Activated T-helper 1 cell treated with anti-CD3 and anti-CD28 coated beads, Interleukin-12 subunit alpha, Interleukin-12 subunit beta, Interleukin-2, Interleukin-4 antibody, amounts not matched to agents 30 ng/mL and 10 ng/mL and 1 ng/mL, durations not matched to agents 14 hours and 24 hours and 36 hours (primary cell): ENCODE measurements at regions of chr22 and their contacts with region 1.

Region 1: GRCh38 chr22:40177738-40178416 is at the start of gene TNRC6B:
- DNase-seq: peak; percentile 79
- H3K4me3 Mint-ChIP-seq: peak within 1 kb of the TSS; percentile 87
- H3K27ac Mint-ChIP-seq: peak within 1 kb of the TSS; percentile 92
- H3K4me1 Mint-ChIP-seq: peaks cover 56% of the 10 kb centered on the region
- H3K27me3 Mint-ChIP-seq: no peaks in the 10 kb centered on the region
- total RNA-seq, gene TNRC6B: 26.2 and 30.9 TPM in 2 replicates

Region 2: DNA sequence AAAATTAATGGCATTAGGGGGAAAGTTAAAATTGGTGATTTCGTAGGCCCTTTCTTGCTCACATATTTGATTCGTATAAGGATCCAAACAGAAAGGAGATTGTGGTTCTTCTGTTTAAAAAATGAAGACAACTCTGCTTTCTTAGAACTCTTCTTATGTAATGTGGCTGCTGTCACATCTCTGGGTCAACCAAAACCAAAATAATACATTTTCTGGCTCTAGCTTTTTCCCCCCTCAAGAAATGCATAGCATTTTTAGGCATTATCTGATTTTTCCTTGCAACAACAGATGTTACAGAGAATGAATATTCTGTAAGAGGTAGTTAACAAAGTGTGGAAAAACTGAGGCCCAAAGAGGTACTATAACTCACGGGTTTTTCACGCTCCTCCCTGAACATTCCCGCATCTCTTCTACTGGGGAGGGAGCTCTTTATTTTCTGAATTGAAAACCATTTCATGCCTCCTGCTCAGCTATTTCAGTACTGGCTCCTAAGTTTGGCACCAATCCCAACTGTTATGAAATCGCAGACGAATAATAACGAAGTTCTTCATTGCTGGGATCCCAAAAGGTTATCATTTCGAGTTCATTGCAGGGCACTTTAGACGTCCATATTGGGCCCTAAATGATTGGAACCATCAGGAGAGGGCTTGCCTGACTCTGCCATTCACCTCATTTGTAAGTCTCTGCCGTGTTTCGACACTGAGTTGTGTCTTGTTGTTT is 259.9 kb before region 1 on chr22:
- intact Hi-C with region 1: loop called (anchors 5 kb)
- DNase-seq: no peak
- H3K4me3 Mint-ChIP-seq: peak overlapping the region; percentile 67
- H3K27ac Mint-ChIP-seq: peak overlapping the region; percentile 77
- H3K4me1 Mint-ChIP-seq: peaks cover 88% of the 10 kb centered on the region
- H3K27me3 Mint-ChIP-seq: no peaks in the 10 kb centered on the region

Region 3: DNA sequence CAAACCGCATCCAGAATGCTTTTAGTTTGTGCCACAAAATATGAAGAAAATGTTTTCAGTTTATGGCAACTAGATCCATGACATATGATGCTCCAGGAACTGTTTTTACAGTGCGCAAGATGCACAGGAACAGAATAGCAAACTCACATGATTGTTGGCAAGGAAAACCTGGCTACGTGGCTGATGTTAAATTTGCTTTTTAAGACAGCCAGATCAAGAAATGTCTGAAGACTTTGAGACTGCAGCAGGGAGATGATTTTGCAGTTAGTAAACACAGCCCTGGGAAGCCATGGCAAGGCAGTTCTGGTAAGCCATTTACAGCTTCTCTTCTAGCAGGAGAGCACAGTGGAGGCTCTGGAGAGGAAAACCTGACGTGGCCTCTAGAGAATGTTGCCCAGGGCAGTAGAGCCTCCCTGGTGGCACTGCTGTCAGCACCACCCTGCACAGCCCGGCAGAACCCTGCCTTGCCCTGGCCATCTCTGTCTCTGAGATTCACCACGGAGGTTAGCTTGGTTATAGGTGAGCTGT is 70.0 kb before region 1 on chr22:
- intact Hi-C with region 1: loop called (anchors 1 kb)
- DNase-seq: peak; percentile 16
- H3K4me3 Mint-ChIP-seq: peak overlapping the region; percentile 84
- H3K27ac Mint-ChIP-seq: peak overlapping the region; percentile 86
- H3K4me1 Mint-ChIP-seq: peaks cover 43% of the 10 kb centered on the region
- H3K27me3 Mint-ChIP-seq: no peaks in the 10 kb centered on the region

Region 4: DNA sequence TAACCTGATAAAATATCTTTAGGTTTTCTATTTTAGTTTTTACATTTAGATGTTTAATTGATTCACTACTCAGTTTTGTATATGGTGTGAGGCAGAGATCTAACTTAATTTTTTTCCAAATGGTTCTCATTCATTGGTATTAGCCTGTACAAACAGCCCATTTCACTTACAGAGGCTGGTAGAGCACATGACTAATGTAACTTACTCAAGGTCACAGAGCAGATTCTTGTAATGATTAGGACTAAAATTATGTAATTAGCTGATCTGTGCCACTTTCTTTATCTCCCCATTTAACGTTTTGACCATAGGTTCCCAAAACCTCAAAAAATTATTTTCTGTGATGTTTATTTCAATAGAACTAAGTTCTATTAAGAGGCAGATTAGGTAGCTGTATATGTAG is 16.7 kb before region 1 on chr22:
- intact Hi-C with region 1: no loop called
- DNase-seq: no peak
- H3K4me3 Mint-ChIP-seq: no peak overlapping the region
- H3K27ac Mint-ChIP-seq: no peak overlapping the region
- H3K4me1 Mint-ChIP-seq: no peaks in the 10 kb centered on the region
- H3K27me3 Mint-ChIP-seq: no peaks in the 10 kb centered on the region

Region 5: GRCh38 chr22:40215266-40215665 is 37.4 kb after region 1 on chr22:
- intact Hi-C with region 1: loop called (anchors 5 kb)
- DNase-seq: no peak
- H3K4me3 Mint-ChIP-seq: no peak overlapping the region
- H3K27ac Mint-ChIP-seq: peak overlapping the region; percentile 76
- H3K4me1 Mint-ChIP-seq: peaks cover 77% of the 10 kb centered on the region
- H3K27me3 Mint-ChIP-seq: no peaks in the 10 kb centered on the region

Region 6: GRCh38 chr22:40235308-40235707 is 57.4 kb after region 1 on chr22:
- intact Hi-C with region 1: no loop called
- DNase-seq: no peak
- H3K4me3 Mint-ChIP-seq: no peak overlapping the region
- H3K27ac Mint-ChIP-seq: no peak overlapping the region
- H3K4me1 Mint-ChIP-seq: peaks cover 32% of the 10 kb centered on the region
- H3K27me3 Mint-ChIP-seq: no peaks in the 10 kb centered on the region

Region 7: DNA sequence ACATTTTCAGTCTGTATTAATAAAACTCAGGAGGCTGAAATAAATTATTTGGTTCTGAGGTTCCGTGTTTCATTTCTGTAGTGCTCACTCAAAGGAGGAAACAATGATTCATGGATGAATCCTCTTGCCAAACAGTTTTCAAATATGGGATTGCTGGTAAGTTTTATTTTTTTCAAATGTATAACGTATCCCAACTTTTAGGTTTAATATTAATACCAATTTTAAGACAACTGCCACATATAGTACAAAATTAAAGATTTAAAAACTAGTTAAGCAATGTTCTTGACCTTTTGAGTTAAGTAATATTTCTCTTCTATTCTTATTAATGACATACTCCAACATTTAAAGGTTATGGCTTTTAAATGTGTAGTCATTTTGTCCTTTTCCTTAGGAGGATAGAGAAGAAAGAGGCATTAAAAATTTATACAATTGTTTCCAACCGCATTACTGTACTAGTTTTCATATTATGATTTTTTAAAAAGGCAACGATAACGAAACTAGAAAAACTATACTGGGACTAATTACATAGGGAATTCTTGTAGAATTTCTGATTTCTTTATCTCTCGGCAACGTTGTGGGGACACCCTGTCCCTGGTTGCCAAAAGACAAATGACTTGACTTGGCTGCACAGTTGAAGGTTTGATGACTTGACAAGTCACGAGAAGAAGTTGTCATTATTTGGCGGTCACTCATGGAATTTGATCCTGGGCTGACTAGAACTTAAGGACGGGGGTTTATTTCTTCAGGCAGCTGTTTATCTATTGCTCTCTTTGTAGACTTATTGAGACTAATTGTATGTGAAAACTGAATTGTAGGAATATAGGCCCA is 99.3 kb after region 1 on chr22:
- intact Hi-C with region 1: loop called (anchors 2 kb)
- DNase-seq: no peak
- H3K4me3 Mint-ChIP-seq: no peak overlapping the region
- H3K27ac Mint-ChIP-seq: peak overlapping the region; percentile 29
- H3K4me1 Mint-ChIP-seq: peaks cover 31% of the 10 kb centered on the region
- H3K27me3 Mint-ChIP-seq: no peaks in the 10 kb centered on the region

Region 8: DNA sequence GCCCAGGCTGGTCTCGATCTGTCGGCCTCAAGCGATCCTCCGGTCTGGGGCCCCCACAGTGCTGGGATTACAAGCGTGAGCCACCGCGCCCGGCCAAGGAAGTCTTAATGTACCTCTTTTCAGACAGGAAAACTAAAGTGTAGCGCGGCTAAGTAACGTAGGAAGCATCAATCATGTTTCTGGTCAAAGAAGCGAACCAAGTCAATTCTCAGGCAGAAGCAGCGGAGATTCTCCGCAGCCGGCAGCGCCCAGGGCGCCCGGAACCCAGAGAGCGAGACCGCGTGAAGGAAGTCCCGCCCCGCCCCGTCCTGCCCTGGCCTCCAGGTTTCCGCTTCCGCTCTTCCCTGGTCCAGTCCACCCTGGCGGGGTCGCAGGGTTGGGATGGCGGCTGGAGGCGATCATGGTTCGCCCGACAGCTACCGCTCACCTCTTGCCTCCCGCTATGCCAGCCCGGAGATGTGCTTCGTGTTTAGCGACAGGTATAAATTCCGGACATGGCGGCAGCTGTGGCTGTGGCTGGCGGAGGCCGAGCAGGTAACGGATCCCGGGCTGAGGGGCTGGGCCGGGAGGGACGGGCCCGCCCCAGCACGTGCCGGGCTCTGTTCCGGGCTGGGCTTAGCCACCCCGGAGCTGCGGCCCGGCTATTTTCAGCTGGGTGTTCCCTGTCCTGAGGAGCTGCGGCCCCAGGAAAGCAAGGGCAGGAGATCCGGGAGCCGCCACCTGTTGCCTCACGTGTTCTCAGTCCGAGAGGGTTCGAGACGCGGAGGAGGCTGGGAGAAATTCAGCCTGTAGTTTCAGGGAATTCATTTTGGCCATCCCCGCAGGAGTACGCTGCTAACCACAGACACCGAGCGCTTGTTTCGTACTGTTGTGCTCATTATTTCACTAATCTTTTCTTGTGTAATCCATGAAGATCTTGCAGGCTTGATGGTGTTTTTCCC is 168.6 kb after region 1 on chr22 and contains the start of gene ADSL:
- intact Hi-C with region 1: loop called (anchors 1 kb)
- DNase-seq: peak; percentile 83
- H3K4me3 Mint-ChIP-seq: peak within 1 kb of the TSS; percentile 94
- H3K27ac Mint-ChIP-seq: peak within 1 kb of the TSS; percentile 97
- H3K4me1 Mint-ChIP-seq: peaks cover 40% of the 10 kb centered on the region
- H3K27me3 Mint-ChIP-seq: no peaks in the 10 kb centered on the region
- total RNA-seq, gene ADSL: 156 and 160 TPM in 2 replicates

Region 9: GRCh38 chr22:41204992-41205900 is 1027.4 kb after region 1 on chr22 and contains the start of gene L3MBTL2:
- intact Hi-C with region 1: loop called (anchors 5 kb)
- DNase-seq: peak; percentile 98
- H3K4me3 Mint-ChIP-seq: peak within 1 kb of the TSS; percentile 97
- H3K27ac Mint-ChIP-seq: peak within 1 kb of the TSS; percentile 94
- H3K4me1 Mint-ChIP-seq: peaks cover 21% of the 10 kb centered on the region
- H3K27me3 Mint-ChIP-seq: peaks cover 12% of the 10 kb centered on the region
- total RNA-seq, gene L3MBTL2: 51.9 and 56.6 TPM in 2 replicates